T-cell (primary cell): ENCODE measurements at regions of chr5 and their contacts with region 1.

Region 1: DNA sequence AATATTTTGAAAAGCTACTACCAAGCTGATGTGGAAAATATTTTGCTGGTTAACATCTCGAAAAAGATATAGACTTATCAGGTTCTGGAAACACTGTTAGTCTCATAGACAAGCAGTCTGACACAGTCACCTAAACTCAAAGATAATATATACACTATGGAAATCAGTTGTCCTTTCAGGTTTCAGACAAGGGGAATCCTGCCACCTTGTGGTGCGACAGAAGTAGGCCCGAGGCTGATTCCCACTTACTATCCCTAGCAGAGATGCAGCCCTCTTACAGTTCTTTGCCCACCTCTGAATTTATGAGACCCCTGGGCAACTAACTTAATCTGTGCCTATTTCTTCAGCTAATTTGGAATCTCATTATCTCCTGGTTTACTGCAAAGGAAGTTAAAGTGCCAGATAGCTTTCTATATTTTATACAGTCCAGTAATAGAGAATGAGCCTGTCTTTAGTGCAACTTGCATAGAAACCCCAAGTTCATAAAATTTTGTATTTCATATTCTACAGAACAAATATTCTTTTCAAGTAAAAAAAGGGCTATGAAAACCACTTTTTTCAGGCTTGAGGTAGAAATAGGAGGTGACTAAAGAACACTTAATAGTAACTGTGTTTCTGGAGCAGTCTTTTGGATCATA is 16.9 kb downstream of the RAD1 start:
- DNase-seq: peak; percentile 2 to 77 (median 43)
- ATAC-seq: peak; percentile 64 to 75 (median 70)
- H3K4me3 ChIP-seq: no peak overlapping the region
- H3K4me3 Mint-ChIP-seq: no peak overlapping the region
- H3K27ac ChIP-seq: no peak overlapping the region
- H3K27ac Mint-ChIP-seq: no peak overlapping the region
- H3K4me1 ChIP-seq: no peaks in the 10 kb centered on the region
- H3K4me1 Mint-ChIP-seq: no peaks in the 10 kb centered on the region
- H3K27me3 ChIP-seq: no peaks in the 10 kb centered on the region
- H3K27me3 Mint-ChIP-seq: no peaks in the 10 kb centered on the region

Region 2: DNA sequence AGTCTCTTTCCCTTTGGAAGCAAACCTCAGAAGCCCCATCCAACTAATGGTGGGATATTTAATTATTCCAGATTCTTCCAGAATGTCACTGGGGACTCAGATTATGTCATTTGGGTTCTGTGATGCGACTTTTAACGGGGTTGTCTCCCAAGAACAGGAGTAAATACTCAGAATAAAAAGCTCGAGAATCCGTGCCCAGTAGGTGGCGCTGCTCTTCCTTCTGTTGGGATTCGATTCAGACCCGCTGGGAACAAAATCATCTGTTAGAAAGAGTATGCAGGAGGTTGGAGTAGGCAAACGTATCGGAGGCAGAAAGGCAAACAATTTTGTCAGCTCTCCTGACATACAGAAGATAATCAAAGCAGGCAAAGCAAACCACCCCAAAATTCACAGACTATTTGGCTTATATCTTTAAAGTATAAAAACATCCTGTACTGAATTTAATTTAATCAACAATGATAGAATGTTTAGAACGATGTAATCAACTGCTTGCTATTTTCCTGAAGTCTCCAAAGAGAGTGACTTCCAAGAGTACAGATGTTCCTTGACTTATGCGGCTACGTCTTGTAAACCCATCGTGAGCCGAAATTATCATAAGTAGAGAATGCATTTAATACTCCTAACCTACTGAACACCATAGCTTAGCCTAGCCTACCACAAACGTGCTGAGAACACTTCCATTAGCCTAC is 412.1 kb before region 1 on chr5:
- CTCF ChIA-PET with region 1: interaction called, 4 to 10 read pairs
- POLR2A ChIA-PET with region 1: interaction called in 1 of 2 experiments, 6 read pairs
- DNase-seq: peak in 32 of 35 experiments; percentile 20 to 77 (median 51)
- ATAC-seq: no peak
- H3K4me3 ChIP-seq: no peak overlapping the region
- H3K4me3 Mint-ChIP-seq: no peak overlapping the region
- H3K27ac ChIP-seq: no peak overlapping the region
- H3K27ac Mint-ChIP-seq: no peak overlapping the region
- H3K4me1 ChIP-seq: no peaks in the 10 kb centered on the region
- H3K4me1 Mint-ChIP-seq: peaks cover 3 to 6% (median 3%) of the 10 kb centered on the region in 3 donors
- H3K27me3 ChIP-seq: peaks cover 0 to 6% of the 10 kb centered on the region in 2 experiments
- H3K27me3 Mint-ChIP-seq: peaks cover 23 to 29% of the 10 kb centered on the region in 2 donors

Region 3: GRCh38 chr5:34522599-34523386 is 375.6 kb before region 1 on chr5:
- CTCF ChIA-PET with region 1: interaction called, 21 to 29 read pairs
- POLR2A ChIA-PET with region 1: interaction called in 1 of 2 experiments, 4 read pairs
- DNase-seq: peak in 30 of 35 experiments; percentile 7 to 72 (median 28)
- ATAC-seq: peak in 3 of 4 experiments; percentile 37 to 47 (median 45)
- H3K4me3 ChIP-seq: no peak overlapping the region
- H3K4me3 Mint-ChIP-seq: no peak overlapping the region
- H3K27ac ChIP-seq: no peak overlapping the region
- H3K27ac Mint-ChIP-seq: no peak overlapping the region
- H3K4me1 ChIP-seq: no peaks in the 10 kb centered on the region
- H3K4me1 Mint-ChIP-seq: no peaks in the 10 kb centered on the region
- H3K27me3 ChIP-seq: no peaks in the 10 kb centered on the region
- H3K27me3 Mint-ChIP-seq: peaks cover 6% of the 10 kb centered on the region in 2 donors

Region 4: GRCh38 chr5:34620185-34620584 is 278.2 kb before region 1 on chr5:
- CTCF ChIA-PET with region 1: no interaction called
- POLR2A ChIA-PET with region 1: no interaction called
- DNase-seq: no peak
- ATAC-seq: no peak
- H3K4me3 ChIP-seq: no peak overlapping the region
- H3K4me3 Mint-ChIP-seq: no peak overlapping the region
- H3K27ac ChIP-seq: no peak overlapping the region
- H3K27ac Mint-ChIP-seq: no peak overlapping the region
- H3K4me1 ChIP-seq: no peaks in the 10 kb centered on the region
- H3K4me1 Mint-ChIP-seq: no peaks in the 10 kb centered on the region
- H3K27me3 ChIP-seq: peaks cover 0 to 2% of the 10 kb centered on the region in 2 experiments
- H3K27me3 Mint-ChIP-seq: peaks cover 3 to 33% of the 10 kb centered on the region in 2 donors

Region 5: GRCh38 chr5:34858790-34859189 is 39.6 kb before region 1 on chr5:
- CTCF ChIA-PET with region 1: no interaction called
- POLR2A ChIA-PET with region 1: no interaction called
- DNase-seq: no peak
- ATAC-seq: no peak
- H3K4me3 ChIP-seq: no peak overlapping the region
- H3K4me3 Mint-ChIP-seq: no peak overlapping the region
- H3K27ac ChIP-seq: no peak overlapping the region
- H3K27ac Mint-ChIP-seq: no peak overlapping the region
- H3K4me1 ChIP-seq: no peaks in the 10 kb centered on the region
- H3K4me1 Mint-ChIP-seq: no peaks in the 10 kb centered on the region
- H3K27me3 ChIP-seq: no peaks in the 10 kb centered on the region
- H3K27me3 Mint-ChIP-seq: no peaks in the 10 kb centered on the region